T-cell (primary cell): ENCODE measurements at regions of chr3 and their contacts with region 1.

Region 1: GRCh38 chr3:184186309-184187207 is 559 bp downstream of the ABCF3 start:
- DNase-seq: peak in 2 of 35 experiments; percentile 6 to 7
- ATAC-seq: peak; percentile 11 to 26 (median 22)
- H3K4me3 ChIP-seq: peak overlapping the region; percentile 81 to 96
- H3K4me3 Mint-ChIP-seq: peak overlapping the region; percentile 97 to 99 (median 97)
- H3K27ac ChIP-seq: peak overlapping the region; percentile 56
- H3K27ac Mint-ChIP-seq: peak overlapping the region; percentile 94 to 97
- H3K4me1 ChIP-seq: peaks cover 9 to 30% of the 10 kb centered on the region in 2 experiments
- H3K4me1 Mint-ChIP-seq: peaks cover 46% of the 10 kb centered on the region in 3 donors
- H3K27me3 ChIP-seq: no peaks in the 10 kb centered on the region
- H3K27me3 Mint-ChIP-seq: no peaks in the 10 kb centered on the region

Region 2: GRCh38 chr3:183306798-183307671 is 879.5 kb before region 1 on chr3:
- CTCF ChIA-PET with region 1: no interaction called
- POLR2A ChIA-PET with region 1: no interaction called
- DNase-seq: peak in 21 of 35 experiments; percentile 3 to 57 (median 19)
- ATAC-seq: peak in 2 of 4 experiments; percentile 55 to 77
- H3K4me3 ChIP-seq: no peak overlapping the region
- H3K4me3 Mint-ChIP-seq: no peak overlapping the region
- H3K27ac ChIP-seq: no peak overlapping the region
- H3K27ac Mint-ChIP-seq: no peak overlapping the region
- H3K4me1 ChIP-seq: peaks cover 0 to 2% of the 10 kb centered on the region in 2 experiments
- H3K4me1 Mint-ChIP-seq: peaks cover 4 to 10% (median 8%) of the 10 kb centered on the region in 3 donors
- H3K27me3 ChIP-seq: no peaks in the 10 kb centered on the region
- H3K27me3 Mint-ChIP-seq: no peaks in the 10 kb centered on the region

Region 3: DNA sequence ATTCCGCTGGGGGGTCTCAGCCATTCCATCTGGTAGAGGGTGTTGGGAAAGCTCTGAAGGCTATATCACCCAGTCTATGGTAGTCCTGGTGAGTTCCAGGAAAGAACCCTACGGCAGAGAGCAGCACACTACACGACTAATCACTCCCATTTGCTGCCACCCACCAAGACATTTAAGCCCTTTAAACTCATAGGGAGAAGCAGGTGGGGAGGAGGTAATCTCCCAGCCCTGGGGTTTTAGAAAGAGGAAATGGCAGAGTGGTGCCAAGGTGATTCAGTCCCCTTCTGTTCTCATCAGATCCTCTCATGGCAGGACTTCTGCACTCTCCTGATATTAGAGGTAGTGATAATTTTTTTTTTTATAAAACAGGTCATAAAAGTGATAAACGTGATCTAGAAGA is 32.3 kb after region 1 on chr3:
- CTCF ChIA-PET with region 1: interaction called, 4 to 11 read pairs
- POLR2A ChIA-PET with region 1: no interaction called
- DNase-seq: no peak
- ATAC-seq: no peak
- H3K4me3 ChIP-seq: no peak overlapping the region
- H3K4me3 Mint-ChIP-seq: no peak overlapping the region
- H3K27ac ChIP-seq: no peak overlapping the region
- H3K27ac Mint-ChIP-seq: no peak overlapping the region
- H3K4me1 ChIP-seq: no peaks in the 10 kb centered on the region
- H3K4me1 Mint-ChIP-seq: no peaks in the 10 kb centered on the region
- H3K27me3 ChIP-seq: peaks cover 0 to 28% of the 10 kb centered on the region in 2 experiments
- H3K27me3 Mint-ChIP-seq: peaks cover 14 to 29% of the 10 kb centered on the region in 2 donors

Region 4: DNA sequence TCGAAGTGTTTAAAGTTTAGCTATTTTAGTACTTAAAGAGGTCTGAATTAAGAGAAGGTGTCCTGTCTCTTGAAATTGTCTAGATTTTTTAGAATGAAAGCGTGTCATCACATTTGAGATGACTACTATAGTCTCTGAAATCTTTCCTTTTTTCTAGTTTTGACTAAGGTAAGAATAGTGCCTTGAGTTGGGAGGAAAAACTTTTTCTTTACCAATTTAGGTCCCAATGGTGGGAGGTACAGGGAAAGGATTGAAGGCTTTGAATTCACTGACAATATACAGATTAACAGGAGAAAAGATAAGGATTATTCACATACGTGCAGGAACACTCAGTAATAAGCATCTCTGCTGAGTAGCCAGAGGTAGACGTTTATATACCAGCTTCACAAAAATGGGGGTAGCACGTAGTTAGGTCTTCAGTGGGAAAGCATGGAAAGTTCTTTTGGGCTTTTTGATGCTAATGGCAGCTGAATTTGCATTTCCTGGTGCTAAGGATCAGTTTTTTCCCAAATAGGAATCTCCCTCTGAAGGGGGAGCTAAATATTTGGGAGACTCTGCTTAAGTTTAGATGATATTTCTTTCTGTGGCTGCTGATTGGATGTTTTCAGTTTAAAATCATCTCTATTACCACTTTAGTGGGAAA is 713.5 kb after region 1 on chr3:
- CTCF ChIA-PET with region 1: no interaction called
- POLR2A ChIA-PET with region 1: no interaction called
- DNase-seq: no peak
- ATAC-seq: no peak
- H3K4me3 ChIP-seq: no peak overlapping the region
- H3K4me3 Mint-ChIP-seq: no peak overlapping the region
- H3K27ac ChIP-seq: no peak overlapping the region
- H3K27ac Mint-ChIP-seq: no peak overlapping the region
- H3K4me1 ChIP-seq: no peaks in the 10 kb centered on the region
- H3K4me1 Mint-ChIP-seq: no peaks in the 10 kb centered on the region
- H3K27me3 ChIP-seq: no peaks in the 10 kb centered on the region
- H3K27me3 Mint-ChIP-seq: no peaks in the 10 kb centered on the region